ENCODE measurements at regions of chr7 and their contacts with region 1.

Region 1: DNA sequence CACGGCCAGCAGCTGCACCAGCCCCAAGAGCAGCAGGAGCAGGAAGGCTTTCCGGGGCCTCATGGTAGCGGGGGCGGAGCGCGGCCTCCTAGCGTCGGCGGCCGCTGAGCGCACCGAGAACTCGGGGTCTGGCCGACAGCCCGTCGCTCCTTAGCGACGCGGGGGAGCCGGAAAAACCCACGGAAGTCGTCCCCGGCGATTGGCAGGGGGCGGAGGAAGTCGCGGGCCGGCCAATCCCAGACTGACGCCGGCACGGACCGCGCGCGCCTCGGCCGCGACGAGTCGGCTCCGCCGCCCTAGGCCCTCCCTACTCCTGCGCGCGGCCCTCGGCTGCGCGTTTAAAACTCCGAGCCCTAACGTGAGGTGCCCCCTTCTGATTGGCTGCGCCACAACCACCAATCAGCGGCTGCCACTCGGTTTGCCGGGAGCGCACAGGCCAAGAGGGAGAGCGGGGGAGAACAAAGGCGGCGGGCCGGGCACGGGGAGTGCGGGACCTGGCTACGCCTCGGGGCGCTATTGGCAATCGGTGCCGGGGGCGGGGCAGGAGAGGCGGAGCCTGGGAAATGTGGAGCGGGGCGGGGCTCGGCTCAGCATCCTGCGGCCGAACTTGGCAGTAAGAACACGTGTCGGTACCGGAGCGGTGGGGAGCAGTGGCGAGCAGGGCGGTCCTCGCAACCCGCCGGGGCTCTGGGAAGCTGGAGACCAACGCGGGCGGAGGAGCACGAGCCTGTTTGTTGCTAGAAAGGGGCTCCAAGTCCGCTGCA is at the start of gene PDIA4:
- DNase-seq: peak; percentile 100
- ATAC-seq: peak; percentile 92
- H3K4me3 Mint-ChIP-seq: peak within 1 kb of the TSS; percentile 99
- H3K27ac Mint-ChIP-seq: peak within 1 kb of the TSS; percentile 94
- H3K4me1 Mint-ChIP-seq: peaks cover 32% of the 10 kb centered on the region
- H3K27me3 Mint-ChIP-seq: no peaks in the 10 kb centered on the region
- total RNA-seq, gene PDIA4: 88.3 to 90.1 TPM

Region 2: GRCh38 chr7:148503875-148504487 is 524.5 kb before region 1 on chr7:
- CTCF ChIA-PET with region 1: no interaction called
- POLR2A ChIA-PET with region 1: no interaction called
- intact Hi-C with region 1: loop called in 1 of 2 experiments (anchors 2 kb)
- DNase-seq: no peak
- ATAC-seq: no peak
- H3K4me3 Mint-ChIP-seq: no peak overlapping the region
- H3K27ac Mint-ChIP-seq: no peak overlapping the region
- H3K4me1 Mint-ChIP-seq: peaks cover 36% of the 10 kb centered on the region
- H3K27me3 Mint-ChIP-seq: peaks cover 24% of the 10 kb centered on the region

Region 3: GRCh38 chr7:148914208-148914777 is 114.2 kb before region 1 on chr7:
- CTCF ChIA-PET with region 1: no interaction called
- POLR2A ChIA-PET with region 1: no interaction called
- intact Hi-C with region 1: loop called in 1 of 2 experiments (anchors 2 kb)
- DNase-seq: peak; percentile 82
- ATAC-seq: peak; percentile 62
- H3K4me3 Mint-ChIP-seq: peak overlapping the region; percentile 47
- H3K27ac Mint-ChIP-seq: peak overlapping the region; percentile 98
- H3K4me1 Mint-ChIP-seq: peaks cover 73% of the 10 kb centered on the region
- H3K27me3 Mint-ChIP-seq: no peaks in the 10 kb centered on the region

Region 4: DNA sequence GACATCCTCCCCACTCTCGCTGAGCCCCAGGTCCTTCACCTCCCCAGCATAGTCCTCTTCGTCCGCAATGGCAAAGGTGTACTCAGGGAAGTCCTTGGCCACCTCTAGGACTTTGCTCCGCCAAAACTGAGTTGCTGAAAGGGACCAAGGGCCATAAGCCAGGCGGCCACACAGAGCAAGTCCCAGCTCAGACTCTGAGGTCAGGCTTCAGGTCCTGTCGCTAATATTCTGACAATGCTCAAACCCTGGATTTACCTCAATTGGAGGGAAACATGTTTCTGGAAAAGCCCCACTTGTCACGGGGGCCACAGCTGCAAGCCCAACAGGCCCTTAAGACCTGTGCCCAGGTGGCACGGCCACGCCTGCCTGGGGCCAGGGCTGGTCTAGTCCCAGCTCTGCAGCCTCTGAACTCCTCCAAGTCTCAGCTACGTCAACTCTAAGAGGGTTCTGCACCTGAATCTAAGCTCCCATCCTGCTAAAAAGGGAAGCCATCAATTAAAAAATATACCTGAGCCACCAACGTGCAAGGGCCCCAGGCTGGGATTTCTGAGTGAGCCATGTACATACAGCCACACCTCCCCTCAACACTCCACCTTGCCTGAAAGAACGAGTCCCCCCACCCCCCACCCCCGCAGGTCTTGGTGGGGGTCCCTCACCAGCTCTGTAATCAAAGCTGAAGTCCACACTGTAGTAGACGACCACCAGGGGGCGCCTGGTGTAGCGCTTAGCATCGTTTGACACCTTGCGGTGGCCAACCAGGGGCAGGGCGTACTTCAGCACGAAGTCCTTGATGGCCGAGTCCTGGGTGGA is 23.1 kb before region 1 on chr7:
- CTCF ChIA-PET with region 1: interaction called, 11 read pairs
- POLR2A ChIA-PET with region 1: no interaction called
- intact Hi-C with region 1: no loop called
- DNase-seq: peak; percentile 90
- ATAC-seq: peak; percentile 90
- H3K4me3 Mint-ChIP-seq: no peak overlapping the region
- H3K27ac Mint-ChIP-seq: peak overlapping the region; percentile 8
- H3K4me1 Mint-ChIP-seq: peaks cover 2% of the 10 kb centered on the region
- H3K27me3 Mint-ChIP-seq: no peaks in the 10 kb centered on the region

Region 5: DNA sequence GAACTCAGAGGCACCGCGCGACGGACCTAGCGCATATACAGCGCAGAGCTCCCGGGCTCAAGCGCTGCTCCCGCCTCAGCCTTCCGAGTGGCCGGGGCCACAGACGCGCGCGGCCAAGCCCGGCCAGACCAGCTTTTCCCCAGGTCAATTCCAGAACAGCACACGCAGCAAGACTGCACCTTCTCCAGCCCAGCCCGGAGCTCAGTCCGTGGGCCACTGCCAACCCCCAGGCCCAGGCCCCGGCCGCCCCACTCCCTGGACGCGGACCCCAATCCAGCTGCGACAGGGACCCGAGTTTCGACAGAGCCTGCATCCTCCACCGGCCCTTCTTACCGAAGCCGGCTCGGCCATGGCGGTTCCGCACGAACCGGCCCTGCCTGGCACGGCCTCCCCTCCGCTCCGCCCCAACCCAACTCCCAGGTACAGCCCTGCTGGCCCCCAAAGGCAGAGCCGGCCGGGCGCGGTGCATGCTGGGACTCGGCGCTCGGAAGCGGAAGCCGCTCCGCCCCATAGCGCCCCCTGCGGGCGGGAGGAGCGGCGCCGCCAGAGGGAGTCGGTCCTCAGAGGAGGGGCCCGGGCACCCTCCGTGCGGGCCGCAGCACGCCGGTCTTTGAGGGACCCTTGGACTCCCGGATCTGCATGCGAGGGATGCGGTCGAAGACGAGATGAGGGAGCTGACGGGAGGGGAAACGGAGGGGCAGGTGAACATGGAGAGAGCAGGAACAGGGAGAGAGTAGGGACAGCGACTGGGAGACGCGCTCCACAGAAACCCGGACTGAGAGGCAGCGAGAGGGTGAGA is 97.5 kb after region 1 on chr7 and contains the start of gene ZNF425:
- CTCF ChIA-PET with region 1: no interaction called
- POLR2A ChIA-PET with region 1: no interaction called
- intact Hi-C with region 1: loop called (anchors 1 kb)
- DNase-seq: peak; percentile 96
- ATAC-seq: peak; percentile 88
- H3K4me3 Mint-ChIP-seq: peak within 1 kb of the TSS; percentile 83
- H3K27ac Mint-ChIP-seq: peak within 1 kb of the TSS; percentile 99
- H3K4me1 Mint-ChIP-seq: peaks cover 21% of the 10 kb centered on the region
- H3K27me3 Mint-ChIP-seq: no peaks in the 10 kb centered on the region
- total RNA-seq, gene ZNF425: 0.43 to 0.95 TPM

Region 6: DNA sequence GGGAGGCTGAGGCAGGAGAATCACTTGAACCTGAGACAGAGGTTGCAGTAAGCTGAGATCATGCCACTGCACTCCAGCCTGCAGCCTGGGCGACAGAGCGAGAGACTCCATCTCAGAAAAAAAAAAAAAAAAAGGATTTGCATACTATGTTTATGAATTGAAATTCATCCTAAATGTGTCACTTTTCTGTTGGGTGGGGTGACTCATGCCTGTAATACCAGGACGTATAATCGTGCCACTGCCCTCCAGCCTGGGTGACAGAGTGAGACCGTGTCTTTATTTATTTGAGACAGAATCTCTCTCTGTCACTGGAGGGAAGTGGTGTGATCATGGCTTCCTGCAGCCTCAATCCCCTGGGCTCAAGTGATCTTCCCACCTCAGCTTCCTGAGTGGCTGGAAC is 216.7 kb after region 1 on chr7:
- CTCF ChIA-PET with region 1: no interaction called
- POLR2A ChIA-PET with region 1: no interaction called
- intact Hi-C with region 1: loop called in 1 of 2 experiments (anchors 5 kb)
- DNase-seq: peak; percentile 79
- ATAC-seq: peak; percentile 85
- H3K4me3 Mint-ChIP-seq: peak overlapping the region; percentile 48
- H3K27ac Mint-ChIP-seq: peak overlapping the region; percentile 96
- H3K4me1 Mint-ChIP-seq: peaks cover 72% of the 10 kb centered on the region
- H3K27me3 Mint-ChIP-seq: no peaks in the 10 kb centered on the region

Region 7: DNA sequence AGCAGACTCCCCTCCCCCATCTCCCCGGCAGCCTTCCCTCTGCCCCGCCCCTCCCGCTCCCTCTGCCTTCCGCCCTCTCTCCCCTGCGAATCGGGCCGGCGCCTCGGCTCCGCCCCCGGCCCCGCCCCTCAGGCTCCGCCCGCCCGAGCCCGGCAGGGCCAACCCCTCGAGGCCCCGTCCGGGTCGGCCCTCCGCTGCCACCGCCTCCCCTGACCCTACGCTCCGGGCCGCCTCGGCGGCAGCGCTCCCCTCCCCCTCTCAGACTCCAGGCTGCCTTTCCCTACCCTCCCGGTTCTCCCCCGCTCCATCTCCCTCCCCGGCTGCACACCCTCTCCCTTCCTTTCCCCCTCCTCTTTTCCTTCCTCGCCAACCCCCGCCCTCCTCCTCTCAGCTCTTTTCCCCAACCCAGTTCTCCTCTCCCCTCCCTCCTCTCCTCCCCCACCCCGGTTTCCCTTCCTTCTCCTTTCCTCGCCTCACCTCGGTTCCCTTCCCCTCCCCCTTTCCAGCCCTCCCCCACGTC is 743.3 kb after region 1 on chr7:
- CTCF ChIA-PET with region 1: no interaction called
- POLR2A ChIA-PET with region 1: no interaction called
- intact Hi-C with region 1: loop called in 1 of 2 experiments (anchors 2 kb)
- DNase-seq: peak; percentile 93
- ATAC-seq: peak; percentile 98
- H3K4me3 Mint-ChIP-seq: peak overlapping the region; percentile 59
- H3K27ac Mint-ChIP-seq: no peak overlapping the region
- H3K4me1 Mint-ChIP-seq: peaks cover 2% of the 10 kb centered on the region
- H3K27me3 Mint-ChIP-seq: peaks cover 9% of the 10 kb centered on the region